ENCODE measurements at regions of chr16 and their contacts with region 1.

Region 1: GRCh38 chr16:4487955-4488498 is 11.8 kb downstream of the HMOX2 start:
- DNase-seq: no peak
- H3K4me3 Mint-ChIP-seq: peak overlapping the region; percentile 55
- H3K27ac Mint-ChIP-seq: peak overlapping the region; percentile 97
- H3K4me1 Mint-ChIP-seq: peaks cover 47% of the 10 kb centered on the region
- H3K27me3 Mint-ChIP-seq: no peaks in the 10 kb centered on the region

Region 2: DNA sequence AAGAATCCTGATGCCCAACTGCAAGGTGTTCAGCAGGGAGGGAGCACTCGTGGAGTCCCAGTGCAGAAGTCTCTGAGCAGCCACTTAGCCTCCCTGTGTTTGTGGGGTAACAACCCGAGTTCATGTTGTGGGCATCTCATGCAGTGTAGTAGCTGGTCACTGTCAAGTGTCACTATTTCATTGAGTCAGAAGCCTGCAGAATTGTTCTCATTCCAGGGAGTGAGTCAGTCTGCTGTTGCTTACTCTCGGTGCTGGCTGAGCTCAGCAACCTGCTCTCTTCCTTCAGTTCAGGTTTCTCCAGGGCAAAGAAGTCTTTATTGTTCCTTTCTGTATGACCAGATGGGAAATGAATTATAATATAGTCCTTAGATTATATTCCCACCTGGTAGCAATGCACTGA is 12.2 kb after region 1 on chr16:
- CTCF ChIA-PET with region 1: interaction called, 43 read pairs
- POLR2A ChIA-PET with region 1: interaction called, 48 read pairs
- DNase-seq: no peak
- H3K4me3 Mint-ChIP-seq: no peak overlapping the region
- H3K27ac Mint-ChIP-seq: no peak overlapping the region
- H3K4me1 Mint-ChIP-seq: peaks cover 64% of the 10 kb centered on the region
- H3K27me3 Mint-ChIP-seq: no peaks in the 10 kb centered on the region

Measured in activated CD4-positive, alpha-beta memory T cell treated with anti-CD3 and anti-CD28 coated beads, Interleukin-2, amount 10 ng/mL, durations not matched to agents 7 days and 5 days (primary cell).